K562 (cell line): ENCODE measurements at regions of chr17 and their contacts with region 1.

Region 1: GRCh38 chr17:75154195-75155106 is at the start of gene JPT1:
- DNase-seq: peak; percentile 97 to 99 (median 99)
- ATAC-seq: peak; percentile 97
- H3K4me3 ChIP-seq: peak within 1 kb of the TSS; percentile 98
- H3K27ac ChIP-seq: peak within 1 kb of the TSS; percentile 94
- H3K4me1 ChIP-seq: peaks cover 15 to 20% of the 10 kb centered on the region in 2 experiments
- H3K27me3 ChIP-seq: no peaks in the 10 kb centered on the region
- CTCF ChIP-seq: no peak
- EP300 ChIP-seq: no peak; the same call in none of the 2 replicates
- POLR2A ChIP-seq: peak; percentile 100
- RAD21 ChIP-seq: no peak
- polyA plus RNA-seq, gene JPT1: 67.8 to 77.7 TPM

Region 2: GRCh38 chr17:75124041-75124818 is 30.2 kb before region 1 on chr17:
- CTCF ChIA-PET with region 1: no interaction called
- POLR2A ChIA-PET with region 1: interaction called, 12 read pairs
- in situ Hi-C with region 1: no loop called
- intact Hi-C with region 1: no loop called
- DNase-seq: peak; percentile 67 to 91 (median 76)
- ATAC-seq: peak; percentile 92
- H3K4me3 ChIP-seq: no peak overlapping the region
- H3K27ac ChIP-seq: peak overlapping the region; percentile 85
- H3K4me1 ChIP-seq: peaks cover 24 to 28% of the 10 kb centered on the region in 2 experiments
- H3K27me3 ChIP-seq: no peaks in the 10 kb centered on the region
- CTCF ChIP-seq: no peak
- EP300 ChIP-seq: peak; percentile 88
- POLR2A ChIP-seq: peak; percentile 63
- RAD21 ChIP-seq: peak in 1 of 2 experiments; percentile 16; a peak in 1 of 4 replicates

Region 3: GRCh38 chr17:75173526-75173925 is 19.1 kb after region 1 on chr17:
- CTCF ChIA-PET with region 1: no interaction called
- POLR2A ChIA-PET with region 1: interaction called, 55 read pairs
- in situ Hi-C with region 1: no loop called
- intact Hi-C with region 1: no loop called
- DNase-seq: no peak
- ATAC-seq: no peak
- H3K4me3 ChIP-seq: no peak overlapping the region
- H3K27ac ChIP-seq: no peak overlapping the region
- H3K4me1 ChIP-seq: no peaks in the 10 kb centered on the region; a peak in 1 of 5 replicates
- H3K27me3 ChIP-seq: no peaks in the 10 kb centered on the region
- CTCF ChIP-seq: no peak
- EP300 ChIP-seq: no peak
- POLR2A ChIP-seq: no peak
- RAD21 ChIP-seq: no peak

Region 4: DNA sequence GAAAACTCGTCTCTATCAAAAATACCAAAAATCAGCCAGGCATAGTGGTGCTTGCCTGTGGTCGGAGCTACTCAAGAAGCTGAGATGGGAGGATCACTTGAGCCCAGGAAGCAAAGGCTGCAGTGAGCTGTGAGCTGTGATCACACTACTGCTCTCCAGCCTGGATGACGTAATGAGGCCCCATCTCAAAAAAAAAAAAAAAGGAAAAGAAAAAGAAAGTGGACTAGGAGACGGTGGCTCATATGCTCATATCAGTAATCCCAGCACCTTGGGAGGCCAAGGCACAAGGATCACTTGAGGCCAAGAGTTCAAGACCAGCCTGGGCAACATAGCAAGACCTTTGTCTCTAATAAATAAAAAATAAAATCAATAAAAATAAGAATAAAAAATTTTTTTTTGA is 37.1 kb after region 1 on chr17:
- CTCF ChIA-PET with region 1: no interaction called
- POLR2A ChIA-PET with region 1: interaction called, 11 read pairs
- in situ Hi-C with region 1: no loop called
- intact Hi-C with region 1: no loop called
- DNase-seq: peak in 2 of 4 experiments; percentile 16 to 60
- ATAC-seq: peak; percentile 76
- H3K4me3 ChIP-seq: no peak overlapping the region
- H3K27ac ChIP-seq: 0 out of 3 replicates have a peak overlapping the region, but pooled peaks have one; percentile 3
- H3K4me1 ChIP-seq: peaks cover 7 to 11% of the 10 kb centered on the region in 2 experiments; a peak in 2 of 5 replicates
- H3K27me3 ChIP-seq: no peaks in the 10 kb centered on the region
- CTCF ChIP-seq: no peak
- EP300 ChIP-seq: no peak
- POLR2A ChIP-seq: no peak
- RAD21 ChIP-seq: no peak

Region 5: DNA sequence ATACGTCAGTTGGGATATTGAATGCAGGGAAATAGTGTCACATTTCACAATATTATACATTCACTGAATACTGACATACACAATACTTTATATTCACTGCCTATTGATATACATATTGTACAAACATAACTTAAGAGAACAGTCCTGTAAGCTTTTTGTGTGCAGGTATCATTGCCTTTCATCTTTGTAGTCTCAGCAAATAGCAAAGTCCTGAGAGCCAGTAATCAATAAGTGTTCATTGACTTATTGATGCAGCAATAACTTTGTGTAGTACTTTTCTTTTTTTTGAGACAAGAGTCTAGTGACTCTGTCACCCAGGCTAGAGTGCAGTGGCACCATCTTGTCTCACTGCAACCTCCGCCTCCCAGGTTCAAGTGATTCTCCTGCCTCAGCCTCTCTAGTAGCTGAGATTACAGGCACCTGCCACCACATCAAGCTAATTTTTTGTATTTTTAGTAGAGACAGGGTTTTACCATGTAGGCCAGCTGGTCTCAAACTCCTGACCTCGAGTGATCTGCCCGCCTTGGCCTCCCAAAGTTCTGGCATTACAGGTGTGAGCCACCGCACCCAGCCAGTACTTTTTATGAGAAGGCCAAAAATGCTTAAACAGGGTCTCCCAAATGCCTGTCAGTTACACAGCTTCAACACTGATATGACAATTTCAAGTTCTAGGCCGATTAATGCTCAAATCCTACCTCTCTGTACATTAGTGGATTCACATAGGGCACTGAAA is 45.6 kb after region 1 on chr17:
- CTCF ChIA-PET with region 1: no interaction called
- POLR2A ChIA-PET with region 1: interaction called, 8 read pairs
- in situ Hi-C with region 1: no loop called
- intact Hi-C with region 1: loop called (anchors 5 kb)
- DNase-seq: no peak
- ATAC-seq: no peak
- H3K4me3 ChIP-seq: no peak overlapping the region
- H3K27ac ChIP-seq: no peak overlapping the region
- H3K4me1 ChIP-seq: peaks cover 0 to 4% of the 10 kb centered on the region in 2 experiments; a peak in 1 of 5 replicates
- H3K27me3 ChIP-seq: no peaks in the 10 kb centered on the region
- CTCF ChIP-seq: no peak
- EP300 ChIP-seq: no peak
- POLR2A ChIP-seq: no peak
- RAD21 ChIP-seq: no peak

Region 6: DNA sequence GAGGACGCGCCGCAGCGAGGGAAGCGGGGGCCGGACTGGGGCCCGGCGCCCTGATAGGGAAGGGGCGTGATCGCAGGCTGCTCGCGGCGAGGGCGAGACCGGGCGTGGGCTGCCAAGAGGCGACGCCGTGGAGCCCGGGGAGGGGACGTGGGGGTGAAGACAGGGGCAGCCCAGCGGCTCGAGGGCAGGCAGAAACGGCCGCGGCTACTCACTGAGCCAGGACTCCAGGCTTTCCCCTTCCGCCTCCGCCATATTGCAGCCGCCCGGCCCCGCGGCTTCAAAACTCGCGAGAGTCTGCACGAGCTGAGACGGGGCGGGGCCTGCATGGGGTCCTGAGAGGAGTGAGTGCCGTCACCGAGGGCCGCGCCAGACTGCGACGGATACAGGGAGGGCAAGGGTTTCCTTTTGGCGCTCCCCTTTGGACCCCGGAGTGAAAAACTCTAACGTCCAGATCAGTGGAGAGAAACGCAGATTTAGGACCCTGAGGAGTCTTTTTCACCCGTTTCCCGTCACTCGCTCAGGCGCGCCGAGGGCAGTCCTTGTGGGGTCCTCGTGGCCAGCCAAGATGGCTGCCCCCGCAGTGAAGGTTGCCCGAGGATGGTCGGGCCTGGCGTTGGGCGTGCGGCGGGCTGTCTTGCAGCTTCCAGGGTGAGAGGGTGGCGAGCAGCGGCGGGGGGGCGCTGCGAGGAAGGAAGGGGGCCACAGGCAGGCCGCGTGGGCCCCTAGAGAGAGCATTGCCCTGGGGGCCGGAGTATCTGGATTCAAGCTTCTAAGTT is 107.1 kb after region 1 on chr17 and contains the starts of genes GGA3 and MRPS7:
- CTCF ChIA-PET with region 1: no interaction called
- POLR2A ChIA-PET with region 1: interaction called, 23 read pairs
- in situ Hi-C with region 1: no loop called
- intact Hi-C with region 1: no loop called
- DNase-seq: peak; percentile 86 to 97 (median 94)
- ATAC-seq: peak; percentile 96
- H3K4me3 ChIP-seq: peak within 1 kb of the TSS; percentile 91
- H3K27ac ChIP-seq: peak within 1 kb of the TSS; percentile 93
- H3K4me1 ChIP-seq: peaks cover 20 to 23% of the 10 kb centered on the region in 2 experiments; a peak in 4 of 5 replicates
- H3K27me3 ChIP-seq: no peaks in the 10 kb centered on the region
- CTCF ChIP-seq: peak in 1 of 3 experiments; percentile 14; a peak in 2 of 6 replicates
- EP300 ChIP-seq: no peak
- POLR2A ChIP-seq: peak; percentile 95
- RAD21 ChIP-seq: 0 out of 4 replicates have a peak, but pooled peaks have one; percentile 2 to 16
- polyA plus RNA-seq, gene GGA3: 5.7 to 6.3 TPM
- polyA plus RNA-seq, gene MRPS7: 236 to 244 TPM

Region 7: GRCh38 chr17:75271233-75271954 is 116.9 kb after region 1 on chr17:
- CTCF ChIA-PET with region 1: no interaction called
- POLR2A ChIA-PET with region 1: interaction called, 23 read pairs
- in situ Hi-C with region 1: no loop called
- intact Hi-C with region 1: no loop called
- DNase-seq: peak; percentile 89 to 96 (median 92)
- ATAC-seq: peak; percentile 71
- H3K4me3 ChIP-seq: peak overlapping the region; percentile 97
- H3K27ac ChIP-seq: peak overlapping the region; percentile 93
- H3K4me1 ChIP-seq: peaks cover 30 to 59% of the 10 kb centered on the region in 2 experiments; a peak in 4 of 5 replicates
- H3K27me3 ChIP-seq: no peaks in the 10 kb centered on the region
- CTCF ChIP-seq: peak; percentile 60 to 91 (median 83)
- EP300 ChIP-seq: no peak
- POLR2A ChIP-seq: peak; percentile 73; the same call in 1 of the 2 replicates
- RAD21 ChIP-seq: peak; percentile 13 to 64; a peak in 2 of 4 replicates